Left colon (tissue), 2 donors: ENCODE measurements at regions of chr12 and their contacts with region 1.

Region 1: GRCh38 chr12:94101738-94102660 is 46.4 kb upstream of the PLXNC1 start:
- DNase-seq: peak; percentile 85 to 90
- ATAC-seq: peak; percentile 80

Region 2: GRCh38 chr12:93502802-93503623 is 599.0 kb before region 1 on chr12:
- intact Hi-C with region 1: loop called in 1 of 2 experiments (anchors 2 kb)
- DNase-seq: peak; percentile 31 to 42
- ATAC-seq: no peak

Region 3: DNA sequence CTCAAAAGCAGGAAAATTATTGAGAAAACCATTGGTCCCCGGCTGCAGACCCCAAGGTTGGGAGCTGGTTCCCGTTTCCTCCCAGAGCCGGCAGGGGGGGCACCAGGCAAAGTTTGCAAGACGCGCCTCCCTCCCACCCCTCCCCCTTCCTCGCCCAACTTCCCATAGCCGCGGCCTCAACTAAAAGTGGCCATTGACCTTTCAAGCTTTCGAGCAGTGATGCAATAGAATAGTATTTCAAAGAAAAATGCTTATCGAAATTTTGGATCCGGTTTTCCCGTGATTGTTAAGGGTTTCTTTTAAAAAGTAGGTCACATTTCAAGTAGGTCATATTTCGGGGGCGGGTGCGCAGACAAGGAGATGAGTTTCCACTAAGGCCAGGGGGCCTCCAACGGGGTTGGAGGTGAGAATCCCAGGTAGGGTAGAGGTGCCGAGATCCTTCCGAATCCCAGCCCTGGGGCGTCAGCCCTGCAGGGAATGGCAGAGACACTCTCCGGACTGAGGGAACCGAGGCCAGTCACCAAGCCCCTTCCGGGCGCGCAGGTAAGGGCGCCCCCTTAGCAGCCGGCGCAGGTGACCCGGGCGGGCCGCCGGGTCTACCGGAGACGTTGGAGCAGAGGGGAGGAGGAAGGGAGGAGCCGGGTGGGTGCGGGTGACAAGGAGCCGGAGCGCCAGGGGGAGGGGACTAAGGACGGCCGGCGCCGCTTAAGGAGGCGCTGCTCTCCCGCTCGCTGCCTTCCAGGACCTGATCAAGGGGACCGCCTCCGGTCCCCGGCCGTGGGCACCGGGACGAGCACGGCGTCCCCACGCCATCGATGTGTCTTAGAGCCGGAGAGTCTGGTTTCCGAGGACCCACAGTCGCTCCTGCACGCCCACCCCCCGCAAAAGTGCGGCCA is 532.1 kb before region 1 on chr12:
- intact Hi-C with region 1: loop called in 1 of 2 experiments (anchors 5 kb)
- DNase-seq: peak; percentile 91 to 92
- ATAC-seq: peak; percentile 75

Region 4: DNA sequence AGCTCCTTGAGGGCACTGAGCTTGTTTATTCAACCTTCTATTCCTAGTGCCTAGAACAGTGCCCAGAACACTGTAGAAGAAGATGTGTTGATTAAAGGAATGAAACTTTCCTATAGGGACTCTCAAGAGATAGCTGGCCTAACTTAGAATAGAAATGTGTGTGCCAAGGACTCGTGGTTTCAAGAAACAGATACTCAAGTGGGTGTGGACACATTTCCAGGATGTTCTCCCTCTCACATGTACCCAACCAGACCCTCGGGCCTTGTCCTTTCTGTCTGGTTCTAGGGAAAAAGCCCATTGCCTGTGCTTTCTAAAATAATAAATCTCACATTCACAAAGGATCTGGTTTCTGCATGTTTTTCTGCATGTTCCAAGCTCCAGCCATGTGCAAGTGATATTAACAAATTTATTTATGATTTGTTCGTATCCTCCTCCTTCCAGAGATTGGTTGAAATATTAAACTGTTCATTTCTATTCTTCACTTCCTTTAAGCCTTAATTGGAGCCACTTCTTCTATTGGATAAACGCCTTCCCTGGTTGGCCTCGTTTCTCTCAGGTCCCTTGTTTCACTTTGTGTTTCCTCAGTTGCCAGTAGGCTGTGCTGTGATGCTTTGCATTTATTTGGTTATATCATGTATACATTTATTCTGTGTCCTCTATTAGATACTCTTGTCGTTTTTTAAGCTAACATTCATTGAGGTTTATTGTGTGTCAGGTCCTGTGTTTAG is 335.0 kb before region 1 on chr12:
- intact Hi-C with region 1: loop called in 1 of 2 experiments (anchors 5 kb)
- DNase-seq: peak in 1 of 2 donors; percentile 41
- ATAC-seq: peak; percentile 81